ENCODE measurements at regions of chr2 and their contacts with region 1.

Region 1: DNA sequence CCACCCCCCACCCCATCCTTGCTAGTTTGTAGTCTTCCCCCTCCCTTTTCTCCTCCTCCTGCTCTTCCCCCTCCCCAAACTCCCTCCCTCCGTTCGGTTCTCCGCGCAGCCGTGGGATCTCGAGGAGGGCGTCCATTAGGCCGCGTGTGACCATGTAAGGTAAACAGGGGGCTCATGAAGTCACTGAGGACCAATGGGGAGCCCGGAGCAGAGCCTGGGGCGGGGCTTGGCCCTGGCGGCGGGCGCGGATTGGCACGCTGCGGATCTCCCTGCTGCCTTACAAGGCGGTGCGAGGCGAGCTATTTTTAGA is 246 bp upstream of the KLF7 start:
- DNase-seq: peak; percentile 99 to 100 (median 100)
- H3K4me3 ChIP-seq: peak overlapping the region; percentile 71 to 98 (median 89)
- H3K27ac ChIP-seq: peak overlapping the region; percentile 99 to 100 (median 100)
- H3K27me3 ChIP-seq: no peaks in the 10 kb centered on the region
- CTCF ChIP-seq: no peak

Region 2: GRCh38 chr2:206981739-206982340 is 184.2 kb before region 1 on chr2:
- intact Hi-C with region 1: loop called (anchors 2 to 5 kb)
- DNase-seq: peak; percentile 81 to 94 (median 88)
- H3K4me3 ChIP-seq: peak overlapping the region; percentile 19 to 71 (median 52)
- H3K27ac ChIP-seq: peak overlapping the region in 51 of 59 donors; percentile 3 to 87 (median 67)
- H3K27me3 ChIP-seq: no peaks in the 10 kb centered on the region
- CTCF ChIP-seq: peak; percentile 72 to 98 (median 92)

Region 3: DNA sequence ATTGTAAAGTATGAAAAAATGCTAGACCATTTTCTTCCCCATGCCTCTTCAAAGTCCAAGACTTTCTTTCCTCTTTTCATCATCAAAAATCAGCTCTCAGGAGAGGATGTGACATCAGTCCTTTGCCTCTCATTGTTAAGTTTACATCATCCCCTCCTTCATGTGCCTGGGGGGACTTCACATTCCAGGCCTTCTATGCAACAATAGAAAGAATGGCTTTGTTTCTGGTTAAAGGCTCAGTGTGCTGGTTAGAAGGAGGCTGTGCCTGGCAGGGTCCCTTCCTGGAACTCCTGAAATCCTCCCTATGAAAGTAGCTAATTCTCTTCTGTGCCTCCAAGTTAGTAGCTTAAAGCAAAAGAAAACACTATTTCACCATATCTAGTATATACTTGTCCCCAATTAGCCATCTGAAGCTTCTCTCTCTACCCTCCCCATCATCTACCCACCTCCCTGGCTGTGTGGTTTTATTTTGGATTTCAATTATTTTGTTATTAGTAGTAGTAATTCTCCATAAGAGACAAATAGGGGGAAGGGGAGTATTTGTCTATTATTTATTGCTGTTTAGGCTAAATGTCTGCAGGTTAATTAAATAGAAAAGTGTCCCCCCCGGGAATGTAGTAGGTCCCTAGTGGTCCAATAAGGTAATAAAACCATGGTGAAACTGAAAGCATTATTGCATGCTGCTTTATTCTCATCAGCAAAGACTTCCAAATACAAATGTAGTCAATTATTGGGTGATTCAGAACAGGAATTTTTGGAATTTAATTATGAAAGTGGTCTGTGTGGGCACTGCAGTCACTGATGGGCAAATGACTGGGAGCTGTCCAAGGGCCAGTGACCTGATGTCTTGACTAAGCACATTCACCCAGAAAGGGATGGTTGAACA is 157.6 kb before region 1 on chr2:
- intact Hi-C with region 1: no loop called
- DNase-seq: peak in 3 of 10 donors; percentile 5 to 37 (median 20)
- H3K4me3 ChIP-seq: peak overlapping the region in 6 of 59 donors; percentile 2 to 30 (median 17)
- H3K27ac ChIP-seq: peak overlapping the region in 57 of 59 donors; percentile 12 to 95 (median 87)
- H3K27me3 ChIP-seq: no peaks in the 10 kb centered on the region
- CTCF ChIP-seq: peak in 35 of 56 donors; percentile 10 to 48 (median 28)

Region 4: DNA sequence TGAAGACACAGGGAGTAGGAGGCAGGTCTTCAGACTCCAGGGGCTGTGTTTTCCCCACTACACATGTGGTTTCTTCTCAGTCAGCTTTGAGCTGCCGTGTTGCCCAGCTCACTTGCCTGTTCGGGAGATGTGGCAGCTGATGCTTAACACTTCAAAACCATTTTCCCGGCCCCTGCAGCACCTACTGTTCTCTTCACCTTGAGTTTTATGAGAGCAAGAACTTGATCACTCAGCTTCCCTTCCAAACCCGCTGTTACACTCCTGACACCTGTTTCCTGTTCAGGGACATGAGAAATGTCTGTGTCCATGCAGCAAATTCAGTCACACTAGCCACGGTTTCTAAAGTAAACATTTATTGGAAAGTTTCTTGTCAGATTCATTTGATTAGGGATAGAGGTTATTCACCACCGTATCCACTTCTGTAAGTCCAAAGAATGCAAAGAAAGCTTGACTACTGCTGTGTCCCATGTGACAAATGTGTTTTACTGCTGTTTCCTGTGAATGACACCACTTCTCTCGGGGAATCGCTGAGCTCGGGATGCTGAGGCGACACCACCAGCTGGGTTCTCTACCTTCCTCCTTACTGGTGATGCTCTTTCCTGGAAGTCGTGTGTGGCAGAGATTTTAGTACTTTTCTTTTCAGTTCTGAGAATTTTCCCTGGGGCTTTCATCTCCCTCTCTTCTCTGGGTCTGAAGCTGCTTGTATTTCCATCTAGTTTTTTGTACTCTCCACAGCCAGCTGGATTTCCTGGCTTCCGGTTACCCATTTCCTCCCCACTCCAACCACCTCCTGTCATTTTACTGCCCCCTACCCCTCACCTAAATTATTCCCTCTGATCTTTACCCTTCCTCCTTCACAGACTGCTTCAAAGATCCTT is 92.0 kb before region 1 on chr2:
- intact Hi-C with region 1: loop called (anchors 2 to 10 kb)
- DNase-seq: peak in 1 of 10 donors; percentile 24
- H3K4me3 ChIP-seq: peak overlapping the region in 55 of 59 donors; percentile 0 to 65 (median 42)
- H3K27ac ChIP-seq: peak overlapping the region; percentile 30 to 97 (median 88)
- H3K27me3 ChIP-seq: no peaks in the 10 kb centered on the region
- CTCF ChIP-seq: peak in 36 of 56 donors; percentile 10 to 54 (median 31)

Region 5: DNA sequence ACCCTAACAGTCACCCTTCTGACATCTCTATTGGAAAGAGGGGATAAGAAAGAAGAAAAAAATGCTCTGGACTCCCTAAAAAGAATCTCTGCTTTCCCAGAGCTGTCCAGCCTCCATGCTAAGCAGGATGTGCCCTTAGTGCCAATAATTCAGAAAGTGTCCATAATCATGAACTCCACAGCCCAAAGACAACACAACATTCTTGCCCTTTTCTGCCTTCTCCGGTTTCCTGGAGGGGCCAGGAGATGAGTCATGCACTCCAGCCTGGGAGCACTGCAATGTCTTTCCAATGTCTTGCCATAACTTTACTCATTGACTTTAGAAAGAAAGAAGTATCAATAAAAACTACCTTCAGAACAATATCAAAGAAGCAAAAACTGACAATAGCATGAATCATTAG is 44.2 kb before region 1 on chr2:
- intact Hi-C with region 1: loop called in 1 of 2 experiments (anchors 5 kb)
- DNase-seq: no peak
- H3K4me3 ChIP-seq: no peak overlapping the region
- H3K27ac ChIP-seq: peak overlapping the region in 35 of 59 donors; percentile 1 to 72 (median 48)
- H3K27me3 ChIP-seq: no peaks in the 10 kb centered on the region
- CTCF ChIP-seq: no peak

Region 6: DNA sequence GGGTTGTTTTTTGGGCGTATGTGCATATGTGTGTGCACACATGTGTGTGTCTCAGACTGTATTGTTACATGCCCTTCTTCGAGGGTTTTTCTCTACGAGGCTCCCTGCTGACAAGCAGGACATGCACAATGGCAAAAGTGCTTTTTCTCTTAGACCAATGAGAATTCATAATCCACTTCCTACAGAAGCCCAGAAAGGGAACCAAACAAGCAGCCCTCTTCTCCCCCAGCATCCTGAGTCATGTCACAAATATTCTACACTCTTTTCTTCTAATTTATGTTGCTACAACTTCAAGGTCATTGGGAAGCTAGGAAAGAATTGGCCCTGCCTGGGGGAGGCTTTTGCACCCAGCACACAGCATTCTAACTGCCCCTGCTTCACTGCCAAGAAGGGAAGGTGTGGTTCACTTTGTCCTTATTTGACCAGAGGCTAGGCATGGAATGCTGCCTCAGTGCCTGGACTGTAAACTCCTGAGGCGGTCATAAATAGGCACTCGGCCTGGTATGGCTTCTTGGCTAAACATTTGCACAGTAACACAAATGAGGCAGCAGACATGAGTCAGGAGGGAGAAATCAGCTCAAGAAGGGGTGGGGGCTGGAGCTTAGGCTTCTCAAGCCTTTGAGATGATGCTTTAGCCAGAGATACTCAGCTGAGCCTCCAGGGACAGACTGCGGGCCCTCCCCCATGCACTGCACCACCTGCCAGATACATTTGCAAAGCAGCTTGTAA is 92.4 kb after region 1 on chr2:
- intact Hi-C with region 1: loop called (anchors 10 kb)
- DNase-seq: peak in 8 of 10 donors; percentile 30 to 68 (median 55)
- H3K4me3 ChIP-seq: no peak overlapping the region
- H3K27ac ChIP-seq: peak overlapping the region in 44 of 59 donors; percentile 4 to 83 (median 50)
- H3K27me3 ChIP-seq: no peaks in the 10 kb centered on the region
- CTCF ChIP-seq: no peak

Region 7: GRCh38 chr2:207283356-207283755 is 117.4 kb after region 1 on chr2:
- intact Hi-C with region 1: no loop called
- DNase-seq: peak in 1 of 10 donors; percentile 14
- H3K4me3 ChIP-seq: peak overlapping the region in 11 of 59 donors; percentile 5 to 30 (median 23)
- H3K27ac ChIP-seq: peak overlapping the region in 21 of 59 donors; percentile 2 to 69 (median 40)
- H3K27me3 ChIP-seq: no peaks in the 10 kb centered on the region
- CTCF ChIP-seq: peak in 20 of 56 donors; percentile 8 to 40 (median 24)

Region 8: GRCh38 chr2:207473049-207473930 is 307.3 kb after region 1 on chr2:
- intact Hi-C with region 1: loop called (anchors 2 kb)
- DNase-seq: peak; percentile 34 to 80 (median 66)
- H3K4me3 ChIP-seq: peak overlapping the region in 51 of 59 donors; percentile 1 to 57 (median 32)
- H3K27ac ChIP-seq: peak overlapping the region in 52 of 59 donors; percentile 0 to 86 (median 63)
- H3K27me3 ChIP-seq: no peaks in the 10 kb centered on the region
- CTCF ChIP-seq: peak; percentile 41 to 85 (median 76)